ENCODE measurements at regions of chr1 and their contacts with region 1.

Region 1: DNA sequence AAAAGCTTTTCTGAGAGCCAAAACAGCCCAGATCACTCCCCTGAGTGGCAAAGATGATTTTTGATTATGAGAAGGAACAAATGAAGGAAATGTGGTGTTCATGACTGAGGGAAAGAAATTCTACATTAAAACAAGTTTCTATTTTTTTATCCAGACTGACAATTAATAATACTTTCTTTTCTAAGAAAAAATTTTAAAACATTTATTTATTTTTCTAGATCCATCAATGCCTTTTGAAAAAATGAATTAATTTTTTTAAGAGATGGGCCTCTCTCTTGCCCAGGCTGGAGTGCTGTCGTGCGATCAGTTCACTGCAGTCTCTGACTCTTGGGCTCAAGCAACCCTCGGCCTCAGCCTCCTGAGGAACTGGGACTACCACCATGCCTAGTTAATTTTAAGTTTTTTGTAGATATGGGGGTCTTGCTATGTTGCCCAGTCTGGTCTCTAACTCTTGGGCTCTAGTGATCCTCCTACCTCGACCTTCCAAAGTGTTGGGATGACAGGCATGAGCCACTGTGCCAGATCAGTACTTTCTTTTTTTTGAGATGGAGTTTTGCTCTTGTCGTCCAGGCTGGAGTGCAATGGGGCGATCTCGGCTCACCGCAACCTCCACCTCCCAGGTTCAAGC is 11.2 kb upstream of the TXNIP start:
- DNase-seq: no peak
- H3K4me3 ChIP-seq: no peak overlapping the region
- H3K27ac ChIP-seq: no peak overlapping the region
- H3K27me3 ChIP-seq: no peaks in the 10 kb centered on the region
- CTCF ChIP-seq: no peak

Region 2: DNA sequence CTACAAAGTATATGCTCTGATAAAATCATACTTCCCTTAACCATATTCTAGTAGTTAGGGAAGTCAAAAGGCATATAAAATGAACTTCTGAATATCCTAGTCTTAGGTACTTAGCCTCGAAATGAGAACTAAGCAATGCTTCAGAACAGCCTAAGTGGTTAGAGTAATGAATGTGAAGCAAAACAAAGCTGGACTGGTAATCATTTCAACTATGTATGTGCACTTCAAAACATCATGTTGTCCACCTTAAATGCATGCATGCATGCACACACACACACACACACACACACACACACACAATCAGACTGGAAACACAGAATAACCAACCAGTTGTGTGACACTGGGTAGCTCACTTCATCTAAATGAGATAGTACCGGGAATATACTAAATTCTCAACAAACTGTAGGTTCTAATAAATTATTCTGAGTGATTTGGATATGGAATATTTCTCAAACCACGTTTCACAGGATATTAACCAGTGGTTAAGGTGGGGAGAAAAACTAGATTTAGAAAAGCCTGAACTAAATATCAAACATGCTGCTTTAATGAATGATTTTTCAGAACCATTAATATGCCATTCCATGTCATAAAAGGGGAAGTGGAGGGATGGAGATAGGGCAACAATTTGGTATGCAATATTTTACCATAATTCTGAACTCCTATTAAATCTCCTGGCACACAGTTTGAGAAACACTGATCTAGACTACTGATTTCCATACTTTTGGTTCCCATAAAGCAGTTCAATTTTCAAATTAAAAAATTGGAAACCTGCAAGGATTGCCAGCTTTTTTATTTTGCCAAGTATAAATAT is 203.2 kb before region 1 on chr1:
- CTCF ChIA-PET with region 1: no interaction called
- POLR2A ChIA-PET with region 1: no interaction called
- DNase-seq: no peak
- H3K4me3 ChIP-seq: no peak overlapping the region
- H3K27ac ChIP-seq: no peak overlapping the region
- H3K27me3 ChIP-seq: no peaks in the 10 kb centered on the region
- CTCF ChIP-seq: no peak

Region 3: DNA sequence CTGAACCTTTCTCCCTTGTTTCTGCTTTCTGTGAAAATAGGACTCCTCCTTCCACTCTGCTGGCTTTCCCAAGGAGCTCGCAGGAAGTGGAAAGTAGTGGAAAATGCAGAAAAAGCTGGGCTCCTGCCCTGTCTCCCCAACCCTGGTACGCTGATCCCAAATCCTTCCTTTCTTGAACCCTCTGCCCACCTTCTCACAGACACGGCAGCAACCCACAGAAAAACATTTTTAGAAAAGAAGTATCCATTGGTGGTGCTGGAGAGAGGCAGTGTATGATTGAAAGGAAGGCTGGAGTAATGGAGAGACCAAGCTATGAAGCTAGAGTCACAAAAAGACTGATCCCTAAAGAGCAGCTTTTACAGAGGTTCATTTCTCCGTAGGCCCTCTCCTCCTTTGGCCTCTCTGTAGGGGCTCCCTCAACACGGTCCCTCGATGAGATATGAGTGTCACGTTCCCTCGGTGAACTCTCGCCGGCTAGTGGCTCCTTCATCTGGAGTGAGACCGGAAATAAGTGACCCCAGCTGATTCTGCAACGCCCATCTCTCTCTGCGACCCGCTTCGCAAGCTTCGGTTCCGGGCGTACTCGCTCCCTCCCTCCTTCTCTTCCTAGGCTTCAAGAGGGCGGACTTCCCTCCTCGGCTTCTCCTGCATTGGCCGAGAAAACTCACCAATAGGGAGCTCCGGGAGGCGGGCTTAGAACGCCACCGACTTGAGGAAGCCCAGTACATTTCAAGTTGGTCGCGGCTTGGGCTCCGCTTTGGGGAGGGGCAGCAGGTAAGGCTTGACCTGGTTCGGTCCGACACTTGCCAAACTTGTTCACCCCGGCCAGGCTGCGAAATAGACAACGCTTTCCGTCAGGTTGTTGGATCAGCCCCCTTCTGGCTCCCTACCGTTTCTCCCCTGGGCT is 43.4 kb before region 1 on chr1 and contains the starts of genes ANKRD34A and POLR3GL:
- CTCF ChIA-PET with region 1: interaction called, 15 read pairs
- POLR2A ChIA-PET with region 1: no interaction called
- DNase-seq: peak; percentile 72
- H3K4me3 ChIP-seq: peak within 1 kb of the TSS; percentile 79
- H3K27ac ChIP-seq: peak within 1 kb of the TSS; percentile 89
- H3K27me3 ChIP-seq: no peaks in the 10 kb centered on the region
- CTCF ChIP-seq: peak; percentile 15; the same call in 1 of the 2 replicates
- polyA plus RNA-seq, gene ANKRD34A: 0.83 and 1.2 TPM in 2 replicates
- polyA plus RNA-seq, gene POLR3GL: 23.1 and 25.0 TPM in 2 replicates

Region 4: DNA sequence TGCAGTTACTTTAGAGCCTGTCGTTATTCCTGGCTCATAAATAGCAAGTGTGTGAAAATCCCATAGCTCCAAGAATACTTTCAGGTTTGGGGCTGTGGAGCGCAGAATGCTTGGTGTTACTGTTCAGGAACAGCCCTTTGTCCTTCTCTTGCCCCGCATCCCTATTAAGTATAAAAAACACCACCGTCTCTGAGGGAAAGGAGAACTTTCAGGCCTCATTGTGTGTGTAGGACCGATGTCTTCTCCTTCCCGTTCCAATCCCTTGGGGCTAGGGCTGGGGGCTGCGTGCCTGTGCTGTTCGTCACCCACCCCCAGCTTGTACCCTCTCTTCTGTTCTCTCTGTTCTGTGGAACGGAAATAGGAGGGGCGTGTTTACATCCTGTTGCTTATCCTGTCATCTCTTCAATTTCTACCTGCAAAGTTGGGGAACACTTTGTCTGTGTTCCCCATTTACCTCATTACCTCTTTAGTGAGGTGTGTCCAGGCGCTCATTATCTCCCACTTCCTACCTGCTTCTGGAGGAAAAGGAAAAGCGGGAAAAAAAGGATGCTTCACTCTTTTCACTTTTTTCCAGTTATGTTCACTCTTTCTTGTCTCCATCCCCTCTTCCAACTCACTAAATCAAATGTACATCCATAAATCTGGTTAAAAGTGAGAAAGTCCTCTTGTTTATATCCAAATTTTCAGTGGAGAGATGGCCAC is 10.5 kb before region 1 on chr1:
- CTCF ChIA-PET with region 1: interaction called, 16 read pairs
- POLR2A ChIA-PET with region 1: interaction called, 5 read pairs
- DNase-seq: no peak
- H3K4me3 ChIP-seq: peak overlapping the region; percentile 67
- H3K27ac ChIP-seq: peak overlapping the region; percentile 54
- H3K27me3 ChIP-seq: no peaks in the 10 kb centered on the region
- CTCF ChIP-seq: no peak

Region 5: DNA sequence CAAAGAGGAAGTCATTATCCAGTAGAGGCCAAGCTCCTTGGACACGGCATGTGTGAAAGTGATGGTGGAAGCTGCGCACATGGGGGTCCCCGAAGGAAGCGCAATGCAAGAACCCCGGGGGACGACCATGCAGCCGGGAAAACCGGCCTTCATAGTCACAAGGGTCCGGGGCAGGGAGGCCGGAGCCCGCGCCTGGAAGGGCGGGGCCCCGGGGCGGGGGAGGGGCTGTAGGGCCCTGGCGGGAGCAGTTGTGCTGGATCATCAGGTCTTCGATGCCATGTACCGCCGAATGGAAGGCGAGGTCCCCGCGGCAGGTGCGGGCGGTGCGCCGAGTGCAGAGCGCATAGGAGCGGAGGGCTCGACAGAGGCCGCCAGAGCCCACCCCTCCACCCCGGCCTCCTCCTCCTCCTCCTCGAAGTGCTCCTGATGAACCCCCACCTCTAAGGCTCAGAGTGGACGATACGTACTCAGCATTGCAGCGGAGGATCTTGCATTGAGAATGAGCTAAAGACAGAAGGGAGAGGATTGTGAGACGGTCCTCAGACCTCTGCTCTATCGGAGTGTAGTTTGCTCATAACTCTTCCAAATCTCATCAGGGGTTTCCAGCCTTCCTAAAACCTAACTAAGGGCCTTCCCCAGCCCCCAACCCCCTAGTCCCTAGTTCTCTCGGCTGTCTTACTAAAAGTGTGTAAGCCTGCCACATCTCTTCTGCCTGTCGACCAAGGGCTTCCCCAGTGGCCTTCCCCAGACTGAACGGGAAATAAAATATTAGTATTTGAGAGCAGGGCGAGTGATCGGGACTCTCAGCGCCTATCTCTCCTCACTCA is 11.8 kb after region 1 on chr1:
- CTCF ChIA-PET with region 1: interaction called, 22 read pairs
- POLR2A ChIA-PET with region 1: no interaction called
- DNase-seq: no peak
- H3K4me3 ChIP-seq: no peak overlapping the region
- H3K27ac ChIP-seq: no peak overlapping the region
- H3K27me3 ChIP-seq: peaks cover 36% of the 10 kb centered on the region
- CTCF ChIP-seq: no peak

Measured in AG04450 (cell line).